PC-3 (cell line): ENCODE measurements at regions of chr2 and their contacts with region 1.

Region 1: DNA sequence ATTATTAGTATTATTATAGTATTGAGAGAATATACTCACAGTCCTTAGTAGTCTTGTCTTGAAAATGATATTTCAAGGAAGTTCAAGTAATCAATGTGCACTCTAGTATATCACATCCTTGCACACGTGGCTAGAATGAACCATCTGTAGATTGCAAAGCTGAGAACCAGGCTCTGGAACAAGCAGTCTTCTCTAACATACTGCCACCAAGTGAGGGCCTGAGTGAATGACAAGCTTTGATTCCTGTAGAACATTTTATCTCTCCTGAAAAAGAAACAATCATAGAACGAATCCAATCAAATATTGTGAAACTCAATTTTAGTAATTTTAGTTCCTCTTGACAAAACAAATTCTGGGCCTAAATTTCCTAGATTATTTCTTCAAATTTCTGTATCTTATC is 55.3 kb upstream of the SULT1C3 start:
- DNase-seq: peak; percentile 53
- ATAC-seq: peak; percentile 64
- H3K4me3 ChIP-seq: no peak overlapping the region
- H3K27ac ChIP-seq: no peak overlapping the region
- H3K4me1 ChIP-seq: peaks cover 7% of the 10 kb centered on the region
- H3K27me3 ChIP-seq: 0 out of 2 replicates have a peak, but pooled peaks cover 2% of the 10 kb centered on the region
- CTCF ChIP-seq: peak; percentile 64

Region 2: DNA sequence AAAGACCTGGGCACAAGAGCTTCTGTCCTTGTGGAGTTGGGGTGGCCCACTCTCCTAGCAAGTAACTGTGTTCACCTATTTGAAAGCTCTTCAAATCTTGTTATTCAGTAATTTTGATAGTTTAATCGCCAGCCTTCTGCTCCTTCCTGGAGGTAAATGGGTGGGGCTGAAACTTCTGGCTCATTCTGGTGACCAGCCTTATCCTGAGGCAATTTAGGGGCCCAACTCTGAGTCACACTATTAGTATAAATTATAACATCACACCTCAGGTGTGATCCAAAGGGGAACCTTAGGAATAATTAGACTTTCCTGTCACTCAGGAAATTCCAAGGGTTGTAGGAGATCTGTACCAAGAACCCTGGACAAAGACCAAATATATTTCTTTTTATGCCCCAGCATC is 613.5 kb before region 1 on chr2:
- CTCF ChIA-PET with region 1: no interaction called
- POLR2A ChIA-PET with region 1: no interaction called
- intact Hi-C with region 1: loop called (anchors 10 kb)
- DNase-seq: no peak
- ATAC-seq: no peak
- H3K4me3 ChIP-seq: no peak overlapping the region
- H3K27ac ChIP-seq: no peak overlapping the region
- H3K4me1 ChIP-seq: no peaks in the 10 kb centered on the region
- H3K27me3 ChIP-seq: no peaks in the 10 kb centered on the region
- CTCF ChIP-seq: no peak

Region 3: DNA sequence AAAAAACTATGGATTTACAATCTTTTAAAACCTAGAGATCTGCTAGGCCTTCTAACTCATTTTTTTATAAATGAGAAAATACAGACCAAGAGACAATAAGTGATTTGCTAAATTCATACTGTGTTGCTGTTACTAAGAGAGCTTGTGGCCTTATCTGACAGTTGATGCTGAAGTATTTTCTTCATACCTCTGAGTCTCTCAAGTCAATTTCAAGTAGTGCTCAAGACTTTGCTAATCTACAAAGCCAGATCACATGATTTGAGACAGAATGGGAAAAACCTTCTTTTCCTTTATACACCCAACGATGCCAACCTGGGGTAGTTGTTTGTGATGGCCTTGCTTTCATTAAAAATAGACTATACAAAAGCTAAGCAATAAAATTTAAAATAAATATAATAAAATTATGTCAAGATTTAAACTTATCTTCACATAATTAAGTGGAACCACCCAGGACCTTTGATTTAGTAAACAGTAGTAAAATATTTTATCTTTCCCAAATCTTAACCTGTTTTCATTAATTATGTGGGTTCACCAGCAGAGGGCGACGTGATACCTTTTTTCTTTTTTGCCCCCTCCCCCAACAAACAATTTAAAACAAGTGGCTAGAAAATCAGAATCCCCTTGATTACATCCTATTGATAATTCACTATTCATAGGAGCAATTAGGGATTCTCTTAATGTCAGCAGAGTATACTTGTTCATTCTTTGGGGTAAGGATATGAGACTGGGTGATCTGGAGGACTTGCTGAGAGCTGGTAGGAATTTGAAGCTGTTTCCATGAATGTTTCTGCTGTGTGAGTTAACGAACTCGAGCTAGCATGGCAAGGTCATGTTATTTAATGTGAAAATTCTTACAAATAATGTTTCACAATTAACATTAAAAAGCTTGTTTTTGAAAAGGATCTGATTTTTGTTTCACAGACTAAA is 247.7 kb before region 1 on chr2:
- CTCF ChIA-PET with region 1: interaction called, 4 read pairs
- POLR2A ChIA-PET with region 1: no interaction called
- intact Hi-C with region 1: loop called (anchors 2 kb)
- DNase-seq: peak; percentile 44
- ATAC-seq: no peak
- H3K4me3 ChIP-seq: no peak overlapping the region
- H3K27ac ChIP-seq: no peak overlapping the region
- H3K4me1 ChIP-seq: no peaks in the 10 kb centered on the region
- H3K27me3 ChIP-seq: peaks cover 28% of the 10 kb centered on the region
- CTCF ChIP-seq: peak; percentile 80

Region 4: GRCh38 chr2:107984707-107985106 is 199.7 kb before region 1 on chr2:
- CTCF ChIA-PET with region 1: no interaction called
- POLR2A ChIA-PET with region 1: no interaction called
- intact Hi-C with region 1: loop called (anchors 5 kb)
- DNase-seq: no peak
- ATAC-seq: no peak
- H3K4me3 ChIP-seq: no peak overlapping the region
- H3K27ac ChIP-seq: no peak overlapping the region
- H3K4me1 ChIP-seq: no peaks in the 10 kb centered on the region
- H3K27me3 ChIP-seq: no peaks in the 10 kb centered on the region
- CTCF ChIP-seq: no peak

Region 5: GRCh38 chr2:108034849-108035248 is 149.6 kb before region 1 on chr2:
- CTCF ChIA-PET with region 1: no interaction called
- POLR2A ChIA-PET with region 1: no interaction called
- intact Hi-C with region 1: loop called (anchors 5 kb)
- DNase-seq: peak; percentile 31
- ATAC-seq: no peak
- H3K4me3 ChIP-seq: no peak overlapping the region
- H3K27ac ChIP-seq: no peak overlapping the region
- H3K4me1 ChIP-seq: no peaks in the 10 kb centered on the region
- H3K27me3 ChIP-seq: peaks cover 9% of the 10 kb centered on the region
- CTCF ChIP-seq: peak; percentile 80

Region 6: DNA sequence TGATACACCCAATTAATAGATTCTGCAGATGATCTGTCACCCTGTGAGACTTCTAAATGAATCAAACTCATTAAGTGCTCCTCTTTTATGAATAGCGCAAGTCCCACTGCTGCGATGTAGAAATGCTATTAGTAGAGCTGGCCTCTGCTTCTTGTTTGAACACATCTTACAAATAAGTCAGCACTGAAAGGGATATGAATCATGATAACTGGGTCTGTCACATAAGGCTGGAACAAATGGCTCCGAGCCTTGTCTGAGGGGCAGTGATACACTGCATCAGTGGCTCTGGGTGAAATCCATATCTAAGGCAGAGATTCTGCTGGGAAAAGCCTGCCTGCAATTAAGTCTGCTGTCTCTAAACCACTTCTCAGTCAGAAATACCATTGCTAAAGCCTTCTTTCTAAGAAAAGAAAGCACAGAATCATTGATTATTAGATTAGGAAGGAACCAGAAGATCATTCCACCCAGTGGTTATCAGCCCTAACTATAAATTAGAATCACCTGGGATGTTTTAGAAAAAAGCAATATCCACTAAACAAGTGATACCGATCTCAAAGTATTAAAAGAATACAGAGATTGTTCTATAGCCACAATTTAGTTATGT is 122.9 kb before region 1 on chr2:
- CTCF ChIA-PET with region 1: no interaction called
- POLR2A ChIA-PET with region 1: no interaction called
- intact Hi-C with region 1: no loop called
- DNase-seq: no peak
- ATAC-seq: no peak
- H3K4me3 ChIP-seq: no peak overlapping the region
- H3K27ac ChIP-seq: no peak overlapping the region
- H3K4me1 ChIP-seq: no peaks in the 10 kb centered on the region
- H3K27me3 ChIP-seq: peaks cover 79% of the 10 kb centered on the region
- CTCF ChIP-seq: no peak